ENCODE measurements at regions of chr2 and their contacts with region 1.

Region 1: DNA sequence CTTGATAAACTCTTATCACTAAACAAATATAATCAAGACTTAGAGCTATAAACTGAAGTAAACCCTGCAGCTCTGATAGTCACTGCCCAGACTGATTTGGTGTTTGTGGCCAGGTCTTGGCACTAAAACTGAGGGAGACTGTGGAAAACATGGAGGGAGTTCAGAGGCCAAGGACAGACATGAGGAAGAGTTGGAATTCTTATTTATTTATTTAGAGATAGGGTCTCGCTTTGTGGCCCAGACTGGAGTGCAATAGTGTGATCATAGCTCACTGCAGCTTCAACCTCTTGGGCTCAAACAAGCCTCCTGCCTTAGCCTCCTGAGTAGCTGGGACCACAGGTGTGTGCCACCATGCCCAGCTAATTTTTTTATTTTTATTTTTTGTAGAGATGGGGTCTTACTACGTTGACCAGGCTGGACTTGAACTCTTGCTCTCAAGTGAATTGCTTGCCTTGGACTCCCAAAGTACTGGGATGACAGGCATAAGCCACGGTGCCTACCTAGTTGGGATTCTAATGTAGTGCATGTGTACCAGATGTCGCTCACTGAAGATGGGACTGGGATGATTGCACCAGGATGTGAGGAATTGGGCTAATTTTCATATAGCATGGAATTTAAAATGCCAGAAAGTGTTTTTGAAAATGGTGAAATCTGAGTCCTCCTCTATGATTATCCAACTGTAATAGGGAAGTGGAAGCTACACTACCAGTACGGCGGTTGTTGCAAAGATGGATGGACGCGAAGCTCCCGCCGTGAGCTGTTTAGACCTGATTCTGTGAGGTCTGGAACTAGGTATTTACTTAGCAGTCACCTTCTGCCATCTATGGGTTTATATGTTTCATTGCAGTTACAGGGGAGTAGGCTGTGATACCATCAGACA is 52.7 kb upstream of the CTLA4 start:
- DNase-seq: peak; percentile 82
- ATAC-seq: peak; percentile 95
- H3K4me3 ChIP-seq: no peak overlapping the region
- H3K27ac ChIP-seq: no peak overlapping the region
- H3K4me1 ChIP-seq: peaks cover 6% of the 10 kb centered on the region
- H3K27me3 ChIP-seq: peaks cover 20% of the 10 kb centered on the region
- CTCF ChIP-seq: peak; percentile 90
- POLR2A ChIP-seq: peak; percentile 43; the same call in 1 of the 2 replicates
- RAD21 ChIP-seq: peak; percentile 96

Region 2: DNA sequence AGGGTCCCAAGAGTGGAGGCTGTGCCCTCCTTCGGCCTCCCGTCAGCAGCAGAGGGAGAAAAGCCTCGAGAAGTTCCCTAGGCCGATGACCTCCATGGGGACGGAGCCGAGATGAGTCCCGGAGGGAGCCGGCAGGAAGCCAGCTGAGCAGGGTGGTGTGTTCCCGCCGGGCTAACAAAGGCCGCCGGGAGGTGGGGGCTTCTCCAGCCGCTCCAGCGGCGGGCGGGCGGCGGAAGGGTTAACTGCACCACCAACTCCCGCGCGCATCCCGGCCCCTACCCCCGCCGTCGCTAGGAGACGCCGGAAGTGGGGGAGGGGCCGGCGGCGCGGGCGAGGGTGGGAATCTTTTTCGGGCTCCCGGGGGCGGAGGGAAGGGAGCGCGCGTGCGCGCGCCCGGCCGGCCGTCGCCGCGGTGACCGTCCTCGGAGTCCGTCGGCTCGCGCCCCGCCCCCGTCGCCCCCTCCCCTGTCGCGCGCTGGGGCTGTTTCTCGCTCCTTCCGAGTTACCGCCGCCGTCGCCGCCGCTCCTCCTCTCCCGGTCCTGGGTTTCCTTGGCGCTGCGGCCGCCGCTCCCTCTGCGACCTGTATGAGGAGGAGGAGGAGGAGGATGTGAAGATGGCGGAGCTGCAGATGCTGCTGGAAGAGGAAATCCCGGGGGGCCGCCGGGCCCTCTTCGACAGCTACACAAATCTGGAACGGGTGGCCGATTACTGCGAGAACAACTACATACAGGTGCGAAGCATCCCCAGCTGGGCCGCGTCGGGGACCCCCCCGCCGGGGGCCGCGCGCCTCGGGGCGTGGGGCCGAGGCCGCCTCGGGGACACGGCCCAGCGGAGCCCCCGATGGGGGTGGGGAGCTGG is 486.8 kb before region 1 on chr2 and contains the start of gene ABI2:
- CTCF ChIA-PET with region 1: no interaction called
- POLR2A ChIA-PET with region 1: no interaction called
- dilution Hi-C with region 1: no loop called
- in situ Hi-C with region 1: no loop called
- intact Hi-C with region 1: loop called (anchors 10 kb)
- DNase-seq: peak; percentile 69
- ATAC-seq: peak; percentile 89
- H3K4me3 ChIP-seq: peak within 1 kb of the TSS; percentile 92
- H3K27ac ChIP-seq: peak within 1 kb of the TSS; percentile 97
- H3K4me1 ChIP-seq: peaks cover 1% of the 10 kb centered on the region; the same call in 1 of the 2 replicates
- H3K27me3 ChIP-seq: no peaks in the 10 kb centered on the region
- CTCF ChIP-seq: no peak
- POLR2A ChIP-seq: peak; percentile 17; the same call in 1 of the 2 replicates
- RAD21 ChIP-seq: no peak
- total RNA-seq, gene ABI2: 35.0 and 35.7 TPM in 2 replicates

Region 3: DNA sequence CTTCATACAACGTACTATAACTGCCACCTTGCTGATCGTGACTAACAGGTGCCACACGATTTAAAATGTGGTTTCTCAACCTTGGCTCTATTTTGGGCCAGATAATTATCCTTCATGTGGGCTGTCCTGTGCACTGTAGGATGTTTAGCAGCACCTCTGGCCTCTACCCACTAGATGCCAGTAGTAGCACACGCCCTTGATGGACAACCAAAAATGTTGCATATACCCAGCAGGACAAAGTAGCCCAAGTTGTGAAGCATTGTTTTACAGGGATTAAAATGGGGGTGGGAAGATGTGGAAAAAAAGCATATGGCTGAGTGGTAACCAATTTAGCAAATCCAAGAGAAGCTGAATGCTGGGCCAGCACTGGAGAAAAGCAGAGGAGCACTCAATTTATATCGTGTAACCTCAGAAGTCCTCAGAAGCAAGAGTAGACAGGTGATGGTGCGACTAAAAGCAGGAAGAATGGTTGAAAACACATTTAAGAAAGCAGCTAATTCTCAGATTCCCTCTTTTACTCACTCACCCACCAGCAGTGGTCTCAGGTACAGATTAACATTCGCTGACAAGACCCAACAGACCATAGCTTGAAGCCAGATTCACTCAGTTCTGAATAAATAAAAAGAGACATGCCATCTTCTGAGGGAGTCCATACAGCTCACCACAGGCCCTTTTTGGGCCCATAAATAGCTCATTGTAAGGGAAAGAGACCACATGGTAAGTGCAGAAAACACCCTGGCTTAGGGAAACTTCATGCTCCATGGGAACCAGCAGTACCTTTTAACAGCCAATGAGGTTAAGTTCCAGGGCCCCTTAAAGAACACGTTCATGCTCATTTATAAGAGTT is 330.4 kb before region 1 on chr2:
- CTCF ChIA-PET with region 1: interaction called, 3 read pairs
- POLR2A ChIA-PET with region 1: no interaction called
- dilution Hi-C with region 1: no loop called
- in situ Hi-C with region 1: no loop called
- intact Hi-C with region 1: loop called (anchors 1 kb)
- DNase-seq: peak; percentile 16
- ATAC-seq: peak; percentile 59
- H3K4me3 ChIP-seq: no peak overlapping the region
- H3K27ac ChIP-seq: no peak overlapping the region
- H3K4me1 ChIP-seq: no peaks in the 10 kb centered on the region; the same call in 1 of the 2 replicates
- H3K27me3 ChIP-seq: no peaks in the 10 kb centered on the region
- CTCF ChIP-seq: peak; percentile 41
- POLR2A ChIP-seq: no peak
- RAD21 ChIP-seq: peak; percentile 56

Region 4: GRCh38 chr2:203510941-203511305 is 304.0 kb before region 1 on chr2:
- CTCF ChIA-PET with region 1: no interaction called
- POLR2A ChIA-PET with region 1: no interaction called
- dilution Hi-C with region 1: loop called (anchors 25 kb)
- in situ Hi-C with region 1: no loop called
- intact Hi-C with region 1: no loop called
- DNase-seq: no peak
- ATAC-seq: no peak
- H3K4me3 ChIP-seq: no peak overlapping the region
- H3K27ac ChIP-seq: no peak overlapping the region
- H3K4me1 ChIP-seq: no peaks in the 10 kb centered on the region
- H3K27me3 ChIP-seq: no peaks in the 10 kb centered on the region
- CTCF ChIP-seq: no peak
- POLR2A ChIP-seq: no peak
- RAD21 ChIP-seq: no peak

Region 5: DNA sequence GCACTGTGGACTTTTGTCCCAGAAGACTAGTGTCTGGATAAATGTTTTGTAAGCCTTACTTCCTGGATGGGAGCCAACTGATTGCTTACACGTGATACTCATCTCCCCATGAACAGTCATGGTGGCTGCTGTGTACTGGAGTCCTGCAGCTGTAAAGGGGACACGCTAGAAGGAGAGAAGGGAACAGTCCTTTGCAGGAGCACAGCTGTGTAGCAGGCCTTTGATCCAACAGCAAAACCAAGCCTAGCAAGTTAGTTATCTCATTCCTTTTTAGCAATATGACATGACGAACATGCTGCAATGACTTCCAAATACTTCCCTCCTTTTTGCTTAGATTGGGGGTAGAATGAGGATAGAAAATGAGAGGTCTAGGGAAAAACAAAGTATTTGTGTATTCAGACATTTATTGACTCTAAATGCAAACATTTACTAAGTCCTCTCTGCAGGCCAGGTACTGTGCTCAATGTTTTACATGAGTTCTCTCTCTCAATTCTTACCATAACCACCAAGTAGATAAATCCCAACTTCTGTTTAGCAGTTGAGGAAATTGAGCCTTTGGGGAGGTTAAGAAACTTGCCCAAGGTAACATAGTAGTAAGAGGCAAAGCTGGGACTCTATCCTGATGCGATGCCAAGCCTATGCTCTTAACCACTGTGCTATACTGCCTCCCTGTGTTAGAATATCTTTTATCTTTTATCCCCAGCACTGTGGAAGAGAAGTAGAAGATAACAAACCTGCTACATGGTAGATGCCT is 163.9 kb before region 1 on chr2:
- CTCF ChIA-PET with region 1: interaction called, 3 read pairs
- POLR2A ChIA-PET with region 1: no interaction called
- dilution Hi-C with region 1: no loop called
- in situ Hi-C with region 1: no loop called
- intact Hi-C with region 1: loop called (anchors 1 kb)
- DNase-seq: peak; percentile 54
- ATAC-seq: peak; percentile 83
- H3K4me3 ChIP-seq: no peak overlapping the region
- H3K27ac ChIP-seq: no peak overlapping the region
- H3K4me1 ChIP-seq: peaks cover 7% of the 10 kb centered on the region
- H3K27me3 ChIP-seq: no peaks in the 10 kb centered on the region
- CTCF ChIP-seq: peak; percentile 49
- POLR2A ChIP-seq: no peak
- RAD21 ChIP-seq: peak; percentile 74

Region 6: GRCh38 chr2:203909261-203909967 is 94.5 kb after region 1 on chr2:
- CTCF ChIA-PET with region 1: interaction called, 7 read pairs
- POLR2A ChIA-PET with region 1: no interaction called
- dilution Hi-C with region 1: no loop called
- in situ Hi-C with region 1: no loop called
- intact Hi-C with region 1: loop called (anchors 5 kb)
- DNase-seq: peak; percentile 80
- ATAC-seq: peak; percentile 94
- H3K4me3 ChIP-seq: peak overlapping the region; percentile 20; the same call in 1 of the 2 replicates
- H3K27ac ChIP-seq: peak overlapping the region; percentile 57; the same call in 1 of the 2 replicates
- H3K4me1 ChIP-seq: peaks cover 3% of the 10 kb centered on the region; the same call in 1 of the 2 replicates
- H3K27me3 ChIP-seq: no peaks in the 10 kb centered on the region; the same call in 1 of the 2 replicates
- CTCF ChIP-seq: peak; percentile 85
- POLR2A ChIP-seq: no peak
- RAD21 ChIP-seq: peak; percentile 85